H1 (cell line): ENCODE measurements at regions of chr14 and their contacts with region 1.

Region 1: GRCh38 chr14:20657216-20658128 is 16.0 kb upstream of the OR6S1 start:
- DNase-seq: peak; percentile 89 to 92
- H3K4me3 ChIP-seq: peak overlapping the region; percentile 29 to 61 (median 44); a peak in 7 of 8 replicates
- H3K27ac ChIP-seq: no peak overlapping the region
- H3K4me1 ChIP-seq: peaks cover 0 to 5% (median 1%) of the 10 kb centered on the region in 4 experiments; a peak in 2 of 7 replicates
- H3K27me3 ChIP-seq: peaks cover 3 to 18% (median 12%) of the 10 kb centered on the region in 4 experiments; a peak in 6 of 7 replicates
- CTCF ChIP-seq: peak; percentile 78 to 95 (median 95)
- EP300 ChIP-seq: no peak
- POLR2A ChIP-seq: no peak
- RAD21 ChIP-seq: peak; percentile 54 to 57

Region 2: GRCh38 chr14:20624495-20625070 is 32.9 kb before region 1 on chr14:
- CTCF ChIA-PET with region 1: interaction called, 17 read pairs
- POLR2A ChIA-PET with region 1: no interaction called
- DNase-seq: peak in 1 of 2 experiments; percentile 74
- H3K4me3 ChIP-seq: peak overlapping the region; percentile 64 to 99 (median 82)
- H3K27ac ChIP-seq: no peak overlapping the region
- H3K4me1 ChIP-seq: peaks cover 0 to 10% (median 1%) of the 10 kb centered on the region in 4 experiments; a peak in 2 of 7 replicates
- H3K27me3 ChIP-seq: peaks cover 0 to 24% (median 17%) of the 10 kb centered on the region in 4 experiments; a peak in 6 of 7 replicates
- CTCF ChIP-seq: no peak
- EP300 ChIP-seq: no peak
- POLR2A ChIP-seq: no peak
- RAD21 ChIP-seq: no peak

Region 3: DNA sequence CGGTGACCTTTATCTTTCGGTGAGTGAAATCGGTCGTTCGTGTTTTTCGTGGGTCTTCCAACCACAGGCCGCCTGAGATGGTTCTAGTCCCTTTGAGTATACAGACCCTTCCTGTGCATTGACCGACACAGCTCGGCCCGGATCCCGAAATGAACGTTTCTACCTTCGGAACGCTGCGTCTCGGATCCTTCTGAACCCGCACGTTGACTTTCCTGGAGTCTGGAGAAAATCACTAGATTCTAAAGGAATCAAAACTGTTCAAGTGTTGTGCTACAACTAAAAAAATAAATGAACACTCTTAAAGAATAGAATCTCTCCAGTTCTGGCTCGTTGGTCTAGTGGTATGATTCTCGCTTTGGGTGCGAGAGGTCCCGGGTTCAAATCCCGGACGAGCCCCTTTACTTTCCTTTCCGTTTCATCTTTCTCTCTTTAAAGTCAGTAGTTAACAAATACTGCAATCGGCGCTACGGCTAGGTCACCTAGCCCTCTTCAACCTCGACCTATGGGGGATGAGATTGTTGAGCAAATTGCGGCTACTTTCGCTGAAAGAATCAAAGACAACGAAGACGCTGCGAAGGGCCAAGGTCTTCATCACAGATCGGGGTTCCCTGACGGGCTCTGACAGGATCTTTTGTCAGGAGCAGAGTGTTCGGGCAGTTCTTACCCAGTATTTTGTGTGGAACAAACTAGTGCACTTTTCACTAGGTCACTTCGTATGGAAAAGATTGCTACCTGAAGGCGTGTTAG is 24.6 kb before region 1 on chr14:
- CTCF ChIA-PET with region 1: interaction called, 15 read pairs
- POLR2A ChIA-PET with region 1: interaction called, 6 read pairs
- DNase-seq: peak; percentile 82 to 87
- H3K4me3 ChIP-seq: peak overlapping the region; percentile 76 to 96 (median 88)
- H3K27ac ChIP-seq: no peak overlapping the region
- H3K4me1 ChIP-seq: peaks cover 0 to 6% (median 0%) of the 10 kb centered on the region in 4 experiments; a peak in 2 of 7 replicates
- H3K27me3 ChIP-seq: peaks cover 0 to 12% (median 3%) of the 10 kb centered on the region in 4 experiments; a peak in 3 of 7 replicates
- CTCF ChIP-seq: no peak
- EP300 ChIP-seq: no peak
- POLR2A ChIP-seq: no peak
- RAD21 ChIP-seq: no peak

Region 4: DNA sequence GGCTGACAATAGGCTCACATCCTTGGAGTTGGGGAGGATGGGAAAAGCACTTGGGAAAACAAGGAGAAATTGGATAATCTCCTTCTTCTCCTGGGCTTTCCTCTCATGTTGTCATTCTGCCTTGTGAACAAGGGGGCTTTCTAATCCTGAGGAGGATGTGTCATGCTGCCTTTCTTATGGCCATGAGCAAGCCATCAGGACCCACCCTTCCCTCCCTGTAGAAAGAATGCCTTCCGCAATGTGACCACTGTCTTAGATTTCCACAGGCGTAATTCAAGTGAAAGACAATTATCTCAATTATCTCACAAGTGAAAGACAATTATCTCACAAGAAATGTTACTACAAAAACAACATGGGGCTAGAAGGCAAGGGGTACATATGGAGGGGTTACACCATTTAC is 13.0 kb before region 1 on chr14:
- CTCF ChIA-PET with region 1: interaction called, 12 read pairs
- POLR2A ChIA-PET with region 1: no interaction called
- DNase-seq: no peak
- H3K4me3 ChIP-seq: no peak overlapping the region
- H3K27ac ChIP-seq: no peak overlapping the region
- H3K4me1 ChIP-seq: no peaks in the 10 kb centered on the region
- H3K27me3 ChIP-seq: no peaks in the 10 kb centered on the region
- CTCF ChIP-seq: no peak
- EP300 ChIP-seq: no peak
- POLR2A ChIP-seq: no peak
- RAD21 ChIP-seq: no peak

Region 5: GRCh38 chr14:20682435-20683124 is 25.1 kb after region 1 on chr14:
- CTCF ChIA-PET with region 1: interaction called, 282 read pairs
- POLR2A ChIA-PET with region 1: interaction called, 17 read pairs
- DNase-seq: peak in 1 of 2 experiments; percentile 76
- H3K4me3 ChIP-seq: peak overlapping the region; percentile 67 to 99 (median 98)
- H3K27ac ChIP-seq: peak overlapping the region; percentile 62; the same call in 1 of the 2 replicates
- H3K4me1 ChIP-seq: peaks cover 0 to 6% (median 4%) of the 10 kb centered on the region in 4 experiments; a peak in 5 of 7 replicates
- H3K27me3 ChIP-seq: no peaks in the 10 kb centered on the region
- CTCF ChIP-seq: no peak
- EP300 ChIP-seq: no peak
- POLR2A ChIP-seq: peak; percentile 42 to 60
- RAD21 ChIP-seq: no peak

Region 6: DNA sequence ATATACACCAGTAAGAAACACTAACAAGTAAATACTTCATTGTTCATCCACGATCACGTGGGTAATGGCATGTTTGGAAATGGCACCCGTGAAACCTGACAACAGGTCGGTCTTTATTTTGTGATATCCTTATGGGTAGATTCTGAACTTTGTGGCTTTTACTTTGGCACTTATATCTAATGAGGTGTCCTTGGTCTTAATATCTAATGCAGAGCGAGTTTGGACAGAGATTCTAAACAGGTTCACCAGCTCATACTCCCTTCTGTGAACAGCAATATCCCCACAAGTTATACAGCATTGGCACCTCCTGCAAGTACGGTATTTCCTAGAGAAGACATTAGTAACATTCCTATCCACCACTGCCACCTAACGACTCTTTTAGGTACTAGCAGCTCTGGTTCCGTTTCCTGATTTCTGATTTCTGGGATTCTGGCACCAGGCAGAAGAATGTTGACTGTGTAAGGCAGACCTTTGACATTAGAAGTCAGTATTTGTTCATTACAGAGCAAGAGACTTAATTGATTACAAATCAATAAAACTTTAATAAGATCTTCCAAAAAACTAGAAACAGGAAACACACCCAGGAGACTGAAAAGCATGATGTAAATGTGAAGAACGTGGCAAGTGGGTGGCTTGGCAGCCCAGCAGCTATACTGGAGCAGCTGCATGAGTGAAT is 33.5 kb after region 1 on chr14:
- CTCF ChIA-PET with region 1: interaction called, 282 read pairs
- POLR2A ChIA-PET with region 1: no interaction called
- DNase-seq: peak in 1 of 2 experiments; percentile 61
- H3K4me3 ChIP-seq: no peak overlapping the region
- H3K27ac ChIP-seq: no peak overlapping the region
- H3K4me1 ChIP-seq: no peaks in the 10 kb centered on the region
- H3K27me3 ChIP-seq: no peaks in the 10 kb centered on the region
- CTCF ChIP-seq: peak in 2 of 3 experiments; percentile 78 to 86; a peak in 3 of 4 replicates
- EP300 ChIP-seq: no peak
- POLR2A ChIP-seq: no peak
- RAD21 ChIP-seq: peak; percentile 89 to 92

Region 7: DNA sequence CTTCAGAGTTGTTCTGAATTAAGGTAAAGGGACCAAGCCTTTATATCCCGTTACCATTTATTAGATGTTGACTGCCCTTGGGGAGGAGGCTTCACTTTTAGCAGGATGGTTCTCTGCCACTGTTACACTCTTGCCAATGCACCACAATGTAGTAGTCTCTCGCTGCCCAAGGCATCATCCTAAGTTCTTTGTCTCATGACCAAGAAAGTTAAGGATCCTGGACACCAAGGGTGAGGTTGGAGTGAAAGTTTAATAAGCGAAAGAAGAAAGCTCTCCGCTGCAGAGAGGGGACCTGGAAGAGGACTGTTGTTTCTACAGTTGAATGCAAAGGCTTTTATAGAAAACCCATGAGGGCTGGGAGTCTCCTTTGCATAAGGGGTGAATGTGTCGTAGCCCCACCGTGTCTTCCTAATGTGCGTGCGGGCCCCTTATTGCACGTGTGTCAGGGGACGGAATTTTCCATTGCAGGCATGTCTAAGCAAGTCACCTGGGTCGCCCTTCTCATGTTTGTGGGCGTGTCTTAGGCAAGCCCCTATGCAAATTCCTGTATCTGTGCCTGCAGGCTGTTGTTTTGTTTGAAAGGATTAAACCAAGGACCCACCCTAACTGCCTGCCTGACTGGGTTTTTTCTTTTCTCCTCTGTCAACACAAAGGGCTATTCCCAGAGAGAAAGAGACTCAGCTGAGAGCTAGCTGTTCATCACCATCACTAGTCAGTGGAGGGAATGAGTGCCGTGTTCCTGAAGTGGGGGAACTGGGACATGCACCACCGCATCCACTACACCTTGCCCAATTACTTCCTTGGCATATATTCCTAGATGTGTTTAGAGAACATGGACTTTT is 162.8 kb after region 1 on chr14:
- CTCF ChIA-PET with region 1: no interaction called
- POLR2A ChIA-PET with region 1: no interaction called
- DNase-seq: peak in 1 of 2 experiments; percentile 66
- H3K4me3 ChIP-seq: no peak overlapping the region
- H3K27ac ChIP-seq: peak overlapping the region; percentile 50; the same call in 1 of the 2 replicates
- H3K4me1 ChIP-seq: peaks cover 2 to 21% (median 8%) of the 10 kb centered on the region in 4 experiments; a peak in 4 of 7 replicates
- H3K27me3 ChIP-seq: no peaks in the 10 kb centered on the region
- CTCF ChIP-seq: no peak
- EP300 ChIP-seq: 0 out of 3 replicates have a peak, but pooled peaks of 1 of the 2 experiments have one; percentile 57
- POLR2A ChIP-seq: peak in 1 of 2 experiments; percentile 53; a peak in 2 of 3 replicates
- RAD21 ChIP-seq: peak in 1 of 2 experiments; percentile 8; a peak in 1 of 4 replicates